Activated CD8-positive, alpha-beta T cell treated with anti-CD3 and anti-CD28 coated beads, Interleukin-2, amount 10 ng/mL, durations not matched to agents 7 days and 5 days (primary cell): ENCODE measurements at regions of chr11 and their contacts with region 1.

Region 1: GRCh38 chr11:119018074-119018938 is at the starts of genes RPS25 and TRAPPC4:
- DNase-seq: peak; percentile 98
- ATAC-seq: peak; percentile 93
- H3K4me3 Mint-ChIP-seq: peak within 1 kb of the TSS; percentile 99
- H3K27ac Mint-ChIP-seq: peak within 1 kb of the TSS; percentile 100
- H3K4me1 Mint-ChIP-seq: peaks cover 48% of the 10 kb centered on the region
- H3K27me3 Mint-ChIP-seq: no peaks in the 10 kb centered on the region
- total RNA-seq, gene RPS25: 1,115 to 1,170 TPM
- total RNA-seq, gene TRAPPC4: 58.6 to 65.0 TPM

Region 2: GRCh38 chr11:118703563-118704106 is 314.7 kb before region 1 on chr11:
- CTCF ChIA-PET with region 1: no interaction called
- POLR2A ChIA-PET with region 1: no interaction called
- DNase-seq: no peak
- ATAC-seq: no peak
- H3K4me3 Mint-ChIP-seq: no peak overlapping the region
- H3K27ac Mint-ChIP-seq: no peak overlapping the region
- H3K4me1 Mint-ChIP-seq: peaks cover 33% of the 10 kb centered on the region
- H3K27me3 Mint-ChIP-seq: peaks cover 22% of the 10 kb centered on the region

Region 3: GRCh38 chr11:118845369-118845768 is 172.9 kb before region 1 on chr11:
- CTCF ChIA-PET with region 1: no interaction called
- POLR2A ChIA-PET with region 1: no interaction called
- DNase-seq: no peak
- ATAC-seq: no peak
- H3K4me3 Mint-ChIP-seq: no peak overlapping the region
- H3K27ac Mint-ChIP-seq: no peak overlapping the region
- H3K4me1 Mint-ChIP-seq: peaks cover 32% of the 10 kb centered on the region
- H3K27me3 Mint-ChIP-seq: peaks cover 4% of the 10 kb centered on the region

Region 4: GRCh38 chr11:118997627-118998387 is 20.5 kb before region 1 on chr11 and contains the start of gene CENATAC:
- CTCF ChIA-PET with region 1: interaction called, 9 read pairs
- POLR2A ChIA-PET with region 1: interaction called, 37 read pairs
- DNase-seq: peak; percentile 97
- ATAC-seq: peak; percentile 96
- H3K4me3 Mint-ChIP-seq: peak within 1 kb of the TSS; percentile 90
- H3K27ac Mint-ChIP-seq: peak within 1 kb of the TSS; percentile 92
- H3K4me1 Mint-ChIP-seq: peaks cover 39% of the 10 kb centered on the region
- H3K27me3 Mint-ChIP-seq: no peaks in the 10 kb centered on the region
- total RNA-seq, gene CENATAC: 39.3 to 41.1 TPM

Region 5: GRCh38 chr11:119057000-119057769 is 38.9 kb after region 1 on chr11 and contains the start of gene HYOU1:
- CTCF ChIA-PET with region 1: interaction called, 7 read pairs
- POLR2A ChIA-PET with region 1: interaction called, 28 read pairs
- DNase-seq: peak; percentile 99
- ATAC-seq: peak; percentile 96
- H3K4me3 Mint-ChIP-seq: peak within 1 kb of the TSS; percentile 97
- H3K27ac Mint-ChIP-seq: peak within 1 kb of the TSS; percentile 99
- H3K4me1 Mint-ChIP-seq: peaks cover 30% of the 10 kb centered on the region
- H3K27me3 Mint-ChIP-seq: no peaks in the 10 kb centered on the region
- total RNA-seq, gene HYOU1: 133 to 135 TPM

Region 6: DNA sequence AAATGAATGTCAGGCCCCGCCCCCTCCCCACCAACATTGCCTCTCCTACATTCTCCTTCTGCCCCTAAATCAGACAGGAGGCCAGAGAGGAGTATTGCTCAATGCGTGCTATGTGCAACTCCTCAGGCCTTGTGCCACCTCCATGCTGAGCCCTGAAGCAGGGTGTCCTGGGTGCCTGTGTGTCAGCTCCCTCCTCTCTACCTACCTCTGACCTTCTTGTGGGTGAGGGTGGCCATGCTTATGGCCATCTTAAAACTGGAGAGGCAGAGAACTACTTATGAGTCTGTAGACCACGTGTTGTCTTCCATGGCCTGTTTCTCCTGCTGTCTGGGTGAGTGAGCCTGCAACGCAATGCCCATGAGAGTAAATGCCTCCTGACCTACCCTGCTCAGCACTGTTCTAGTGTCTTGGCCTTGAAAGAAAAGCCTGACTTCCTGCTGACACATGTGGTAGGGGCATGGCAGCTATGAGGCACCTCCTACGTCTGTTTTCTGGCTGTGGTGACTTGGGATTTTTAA is 288.1 kb after region 1 on chr11:
- CTCF ChIA-PET with region 1: no interaction called
- POLR2A ChIA-PET with region 1: no interaction called
- DNase-seq: no peak
- ATAC-seq: peak; percentile 70
- H3K4me3 Mint-ChIP-seq: no peak overlapping the region
- H3K27ac Mint-ChIP-seq: peak overlapping the region; percentile 83
- H3K4me1 Mint-ChIP-seq: peaks cover 25% of the 10 kb centered on the region
- H3K27me3 Mint-ChIP-seq: no peaks in the 10 kb centered on the region

Region 7: GRCh38 chr11:119363851-119364590 is 345.7 kb after region 1 on chr11:
- CTCF ChIA-PET with region 1: no interaction called
- POLR2A ChIA-PET with region 1: no interaction called
- DNase-seq: peak; percentile 51
- ATAC-seq: peak; percentile 91
- H3K4me3 Mint-ChIP-seq: peak overlapping the region; percentile 52
- H3K27ac Mint-ChIP-seq: no peak overlapping the region
- H3K4me1 Mint-ChIP-seq: peaks cover 9% of the 10 kb centered on the region
- H3K27me3 Mint-ChIP-seq: peaks cover 41% of the 10 kb centered on the region